ENCODE measurements at regions of chr9 and their contacts with region 1.

Region 1: GRCh38 chr9:126228781-126229444 is 97.7 kb upstream of the MVB12B start:
- DNase-seq: peak; percentile 62
- ATAC-seq: peak; percentile 99
- H3K4me3 Mint-ChIP-seq: no peak overlapping the region
- H3K27ac Mint-ChIP-seq: no peak overlapping the region
- H3K4me1 Mint-ChIP-seq: peaks cover 1% of the 10 kb centered on the region
- H3K27me3 Mint-ChIP-seq: peaks cover 35% of the 10 kb centered on the region
- CTCF ChIP-seq: no peak

Region 2: DNA sequence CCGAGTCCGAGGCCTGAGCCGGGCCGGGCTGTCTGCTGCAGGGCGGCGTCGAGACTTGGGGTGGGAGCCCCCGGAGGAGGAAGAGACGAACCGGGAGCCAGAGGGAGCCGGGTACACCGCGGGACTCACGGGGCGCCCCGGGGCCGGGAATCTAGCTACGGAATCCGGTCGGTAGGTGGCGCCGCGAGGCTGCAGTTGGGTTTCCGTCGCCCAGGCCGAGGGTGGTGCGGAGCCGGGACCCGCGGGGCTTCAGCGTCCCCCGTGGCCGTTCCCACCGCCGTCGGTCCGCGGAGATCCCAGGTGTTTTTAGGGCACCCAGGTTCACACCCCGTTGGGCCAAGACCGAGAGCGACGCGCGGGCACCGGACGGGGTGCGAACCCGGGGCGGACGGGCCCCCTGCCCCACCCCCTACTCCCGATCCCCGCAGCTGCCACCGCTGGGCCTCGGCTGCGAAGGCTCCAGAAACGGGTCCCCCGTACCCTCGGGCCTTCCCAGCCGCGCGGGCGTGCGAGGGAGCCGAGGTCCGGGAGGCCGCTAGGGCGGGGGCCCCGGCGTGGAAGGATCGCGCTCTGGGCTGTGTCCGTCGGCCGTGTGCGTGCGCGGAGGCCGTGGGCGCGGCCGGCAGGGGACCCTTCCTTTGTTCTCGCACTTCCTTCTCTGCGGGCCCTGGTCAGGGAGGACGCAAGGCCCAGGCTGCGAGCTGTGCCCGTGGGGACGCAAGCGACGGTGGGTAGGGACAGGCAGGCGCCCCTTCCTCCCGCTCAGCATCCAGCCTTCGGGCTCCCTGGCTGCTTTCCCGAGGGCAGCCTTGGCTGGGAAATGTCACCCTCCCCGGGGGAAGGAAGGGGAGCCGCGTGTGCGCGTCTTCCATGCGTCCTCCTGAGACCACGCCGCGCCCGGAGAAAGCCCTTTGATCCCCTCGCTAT is 820.7 kb before region 1 on chr9:
- CTCF ChIA-PET with region 1: interaction called, 32 read pairs
- POLR2A ChIA-PET with region 1: no interaction called
- intact Hi-C with region 1: loop called (anchors 1 kb)
- DNase-seq: peak; percentile 79
- ATAC-seq: peak; percentile 86
- H3K4me3 Mint-ChIP-seq: peak overlapping the region; percentile 75
- H3K27ac Mint-ChIP-seq: no peak overlapping the region
- H3K4me1 Mint-ChIP-seq: peaks cover 16% of the 10 kb centered on the region
- H3K27me3 Mint-ChIP-seq: peaks cover 23% of the 10 kb centered on the region
- CTCF ChIP-seq: peak; percentile 68

Region 3: DNA sequence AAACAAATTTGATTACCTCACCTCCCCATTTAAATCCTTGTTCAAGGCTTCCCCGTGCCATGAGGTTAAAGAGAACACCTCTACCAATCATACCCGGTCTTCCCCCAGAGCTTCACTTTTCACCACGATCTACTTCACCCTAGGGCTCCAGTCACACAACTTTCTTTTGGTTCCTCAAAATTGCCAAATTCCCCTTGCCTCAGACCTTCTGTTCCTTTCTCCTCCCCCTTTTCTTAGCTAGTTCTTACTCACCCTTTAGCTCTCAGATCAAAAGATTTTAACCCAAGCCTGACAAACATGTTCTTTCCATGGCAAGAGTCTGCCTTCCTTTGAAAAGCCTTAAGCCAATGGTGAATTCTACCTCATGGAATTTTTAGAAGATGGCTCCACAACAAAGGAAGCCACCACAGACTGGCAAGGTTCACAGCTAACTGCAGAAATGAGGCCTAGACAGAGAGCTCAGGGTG is 578.6 kb before region 1 on chr9:
- CTCF ChIA-PET with region 1: no interaction called
- POLR2A ChIA-PET with region 1: no interaction called
- intact Hi-C with region 1: no loop called
- DNase-seq: no peak
- ATAC-seq: peak; percentile 93
- H3K4me3 Mint-ChIP-seq: peak overlapping the region; percentile 59
- H3K27ac Mint-ChIP-seq: peak overlapping the region; percentile 86
- H3K4me1 Mint-ChIP-seq: peaks cover 86% of the 10 kb centered on the region
- H3K27me3 Mint-ChIP-seq: no peaks in the 10 kb centered on the region
- CTCF ChIP-seq: no peak

Region 4: GRCh38 chr9:126146254-126147145 is 82.4 kb before region 1 on chr9:
- CTCF ChIA-PET with region 1: no interaction called
- POLR2A ChIA-PET with region 1: no interaction called
- intact Hi-C with region 1: loop called (anchors 1 kb)
- DNase-seq: peak; percentile 40
- ATAC-seq: peak; percentile 76
- H3K4me3 Mint-ChIP-seq: peak overlapping the region; percentile 70
- H3K27ac Mint-ChIP-seq: peak overlapping the region; percentile 62
- H3K4me1 Mint-ChIP-seq: peaks cover 23% of the 10 kb centered on the region
- H3K27me3 Mint-ChIP-seq: peaks cover 31% of the 10 kb centered on the region
- CTCF ChIP-seq: no peak

Region 5: GRCh38 chr9:127360829-127361228 is 1131.9 kb after region 1 on chr9:
- CTCF ChIA-PET with region 1: no interaction called
- POLR2A ChIA-PET with region 1: no interaction called
- intact Hi-C with region 1: no loop called
- DNase-seq: no peak
- ATAC-seq: no peak
- H3K4me3 Mint-ChIP-seq: no peak overlapping the region
- H3K27ac Mint-ChIP-seq: no peak overlapping the region
- H3K4me1 Mint-ChIP-seq: no peaks in the 10 kb centered on the region
- H3K27me3 Mint-ChIP-seq: no peaks in the 10 kb centered on the region
- CTCF ChIP-seq: no peak